A673 (cell line): ENCODE measurements at regions of chr3 and their contacts with region 1.

Region 1: DNA sequence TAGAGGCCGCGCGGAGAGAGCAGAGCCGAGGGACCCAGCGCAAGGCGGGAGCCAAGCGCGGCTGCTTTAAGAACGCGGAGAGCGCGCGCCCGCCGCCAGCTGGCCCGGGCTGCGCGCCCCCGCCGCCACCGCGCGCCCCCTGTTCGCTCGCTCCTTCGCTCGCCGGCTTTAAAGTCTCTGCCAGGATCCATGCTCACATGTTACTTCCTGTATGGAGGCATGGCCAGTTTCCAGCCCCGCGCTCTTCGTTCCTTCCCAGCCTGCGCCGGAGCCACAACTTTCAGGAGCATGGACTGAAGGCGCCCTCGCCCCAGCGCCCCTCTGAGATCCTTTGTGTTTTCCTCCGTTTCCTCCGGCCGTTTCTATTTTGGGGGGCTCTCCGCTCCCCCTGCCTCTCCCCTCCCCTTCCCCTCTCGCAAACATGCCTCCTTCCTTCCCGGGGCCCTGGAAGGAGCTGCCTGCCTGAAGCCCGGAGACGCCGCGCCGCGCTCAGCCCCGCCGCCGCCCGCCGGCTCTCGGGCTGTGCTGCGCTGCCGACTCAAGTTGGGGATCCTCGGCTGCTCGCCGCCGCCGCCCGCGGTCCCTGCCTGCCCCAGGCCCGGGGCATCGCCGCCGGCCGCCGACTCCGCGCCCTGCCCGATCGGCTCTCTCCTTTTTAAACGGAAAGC is at the start of gene PTPRG:
- DNase-seq: peak; percentile 88
- H3K4me3 ChIP-seq: peak within 1 kb of the TSS; percentile 65
- H3K27ac ChIP-seq: peak within 1 kb of the TSS; percentile 97
- H3K4me1 ChIP-seq: peaks cover 13% of the 10 kb centered on the region
- H3K27me3 ChIP-seq: no peaks in the 10 kb centered on the region
- CTCF ChIP-seq: no peak
- total RNA-seq, gene PTPRG: 11.5 and 11.7 TPM in 2 replicates

Region 2: GRCh38 chr3:61452535-61453090 is 108.9 kb before region 1 on chr3:
- CTCF ChIA-PET with region 1: no interaction called
- POLR2A ChIA-PET with region 1: no interaction called
- intact Hi-C with region 1: no loop called
- DNase-seq: no peak
- H3K4me3 ChIP-seq: no peak overlapping the region
- H3K27ac ChIP-seq: no peak overlapping the region
- H3K4me1 ChIP-seq: no peaks in the 10 kb centered on the region
- H3K27me3 ChIP-seq: no peaks in the 10 kb centered on the region
- CTCF ChIP-seq: no peak

Region 3: DNA sequence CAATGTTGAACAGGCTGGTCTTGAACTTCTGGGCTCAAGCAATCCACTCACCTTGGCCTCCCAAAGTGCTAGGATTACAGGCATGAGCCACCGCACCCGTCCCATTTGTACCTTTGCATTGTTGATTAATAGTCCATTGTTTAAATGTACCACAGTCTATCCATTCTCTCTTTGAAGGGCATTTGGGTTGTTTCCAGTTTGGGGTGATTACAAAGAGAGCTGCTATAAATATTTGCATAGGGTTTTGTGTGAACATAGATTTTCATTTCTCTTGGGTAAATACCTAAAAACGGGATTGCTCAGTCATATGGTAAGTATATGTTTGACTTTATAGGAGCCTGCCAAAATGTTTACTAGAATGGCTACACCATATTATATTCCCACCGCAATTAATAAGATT is 13.9 kb before region 1 on chr3:
- CTCF ChIA-PET with region 1: no interaction called
- POLR2A ChIA-PET with region 1: interaction called, 10 read pairs
- intact Hi-C with region 1: no loop called
- DNase-seq: no peak
- H3K4me3 ChIP-seq: no peak overlapping the region
- H3K27ac ChIP-seq: no peak overlapping the region
- H3K4me1 ChIP-seq: no peaks in the 10 kb centered on the region
- H3K27me3 ChIP-seq: no peaks in the 10 kb centered on the region
- CTCF ChIP-seq: no peak

Region 4: GRCh38 chr3:61778145-61778494 is 216.6 kb after region 1 on chr3:
- CTCF ChIA-PET with region 1: no interaction called
- POLR2A ChIA-PET with region 1: no interaction called
- intact Hi-C with region 1: loop called (anchors 10 kb)
- DNase-seq: peak; percentile 14
- H3K4me3 ChIP-seq: no peak overlapping the region
- H3K27ac ChIP-seq: no peak overlapping the region
- H3K4me1 ChIP-seq: peaks cover 6% of the 10 kb centered on the region
- H3K27me3 ChIP-seq: no peaks in the 10 kb centered on the region
- CTCF ChIP-seq: 0 out of 2 replicates have a peak, but pooled peaks have one; percentile 32

Region 5: GRCh38 chr3:61936344-61936937 is 374.9 kb after region 1 on chr3:
- CTCF ChIA-PET with region 1: no interaction called
- POLR2A ChIA-PET with region 1: no interaction called
- intact Hi-C with region 1: loop called (anchors 10 kb)
- DNase-seq: peak; percentile 39
- H3K4me3 ChIP-seq: no peak overlapping the region
- H3K27ac ChIP-seq: no peak overlapping the region
- H3K4me1 ChIP-seq: no peaks in the 10 kb centered on the region
- H3K27me3 ChIP-seq: no peaks in the 10 kb centered on the region
- CTCF ChIP-seq: peak; percentile 64

Region 6: DNA sequence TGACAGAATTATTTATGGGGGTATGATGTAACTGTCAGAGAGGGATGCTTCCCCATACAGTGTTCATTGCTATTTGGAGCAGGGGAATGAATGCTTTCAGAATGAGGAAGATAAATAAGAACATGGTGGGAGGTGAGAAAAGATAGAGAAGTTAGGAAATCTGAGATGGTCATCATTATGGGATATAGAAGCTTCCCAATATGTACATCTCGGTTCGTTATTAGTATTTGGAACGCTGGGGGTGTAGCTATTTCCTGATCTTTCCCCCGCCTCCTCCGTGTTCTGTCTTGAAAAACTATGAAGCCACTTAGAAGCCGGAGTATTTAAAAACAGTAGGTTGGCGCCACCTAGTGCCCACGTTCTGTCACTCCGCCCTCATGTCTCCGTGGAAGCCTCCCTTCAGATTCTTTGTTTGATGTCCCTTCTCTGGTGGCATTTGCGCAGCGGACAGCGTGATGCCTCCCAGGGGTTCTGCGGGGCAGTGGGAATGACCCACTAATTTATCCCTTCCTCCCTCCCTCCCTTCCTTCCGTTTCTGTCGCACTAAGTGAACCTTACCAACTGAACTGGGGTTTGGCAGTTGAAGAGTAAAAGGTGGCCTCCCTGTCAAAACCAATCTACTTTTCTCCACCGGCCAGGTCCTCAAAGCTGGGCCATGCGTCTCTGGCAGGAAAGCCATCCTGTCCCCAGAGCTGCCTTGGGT is 627.3 kb after region 1 on chr3:
- CTCF ChIA-PET with region 1: no interaction called
- POLR2A ChIA-PET with region 1: no interaction called
- intact Hi-C with region 1: loop called (anchors 5 kb)
- DNase-seq: peak; percentile 65
- H3K4me3 ChIP-seq: no peak overlapping the region
- H3K27ac ChIP-seq: no peak overlapping the region
- H3K4me1 ChIP-seq: no peaks in the 10 kb centered on the region
- H3K27me3 ChIP-seq: no peaks in the 10 kb centered on the region
- CTCF ChIP-seq: peak; percentile 67